Dendritic cell treated with granulocyte-macrophage colony-stimulating factor and Interleukin-4, amounts not matched to agents 40 ng/mL and 50 ng/mL, for 4 days (primary cell): ENCODE measurements at regions of chr7 and their contacts with region 1.

Region 1: DNA sequence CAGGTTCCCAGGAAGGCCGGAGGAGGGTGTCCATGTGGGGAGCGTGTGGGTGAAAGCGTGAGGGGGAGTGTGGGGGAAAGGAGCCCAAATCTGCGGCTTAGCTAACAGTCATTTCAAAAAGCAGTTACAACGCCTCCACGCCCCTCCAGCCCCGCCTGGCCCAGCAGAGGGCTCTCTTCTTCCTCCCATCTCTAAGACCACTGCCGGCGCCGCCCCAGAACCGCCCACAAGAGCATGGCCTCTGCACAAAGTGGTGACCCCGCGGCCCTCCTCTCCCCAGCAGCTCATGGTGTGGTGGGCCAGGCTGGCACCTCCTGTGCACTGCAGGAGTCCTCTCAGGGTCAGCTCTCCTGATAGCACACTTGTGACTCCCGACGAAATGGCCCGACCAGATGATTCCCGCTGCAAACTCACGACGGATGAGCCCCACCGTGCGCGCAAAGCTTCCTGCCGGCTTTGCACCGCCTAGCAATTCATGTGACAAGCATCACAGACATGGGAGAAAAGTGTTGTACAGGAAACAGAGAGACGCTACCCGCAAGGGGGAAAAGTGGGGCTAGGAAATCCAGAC is 12.4 kb upstream of the HUS1 start:
- H3K4me3 Mint-ChIP-seq: peak overlapping the region; percentile 89
- H3K27ac Mint-ChIP-seq: peak overlapping the region; percentile 85
- H3K4me1 Mint-ChIP-seq: peaks cover 27% of the 10 kb centered on the region
- H3K27me3 Mint-ChIP-seq: no peaks in the 10 kb centered on the region

Region 2: GRCh38 chr7:47600199-47601118 is 391.4 kb before region 1 on chr7:
- intact Hi-C with region 1: no loop called
- H3K4me3 Mint-ChIP-seq: no peak overlapping the region
- H3K27ac Mint-ChIP-seq: no peak overlapping the region
- H3K4me1 Mint-ChIP-seq: peaks cover 42% of the 10 kb centered on the region
- H3K27me3 Mint-ChIP-seq: peaks cover 3% of the 10 kb centered on the region

Region 3: DNA sequence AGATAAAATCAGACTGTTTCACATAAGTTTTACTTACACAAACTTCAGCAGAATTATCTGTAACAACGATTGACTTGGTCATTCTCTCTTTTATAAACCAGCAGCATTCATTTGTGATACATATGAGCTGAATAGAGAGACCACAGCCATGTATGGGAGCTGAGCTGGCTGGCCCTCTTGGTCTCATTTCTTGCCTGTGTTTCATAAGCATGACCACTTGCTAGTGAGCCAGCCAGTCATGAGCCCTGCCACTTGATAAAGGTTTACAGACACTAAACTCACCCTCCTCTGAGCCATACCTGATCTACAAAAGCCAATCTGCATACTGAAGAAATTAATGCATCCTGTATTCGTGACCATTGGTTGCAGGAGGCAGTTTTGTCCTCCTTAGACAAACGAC is 125.7 kb before region 1 on chr7:
- intact Hi-C with region 1: no loop called
- H3K4me3 Mint-ChIP-seq: no peak overlapping the region
- H3K27ac Mint-ChIP-seq: no peak overlapping the region
- H3K4me1 Mint-ChIP-seq: no peaks in the 10 kb centered on the region
- H3K27me3 Mint-ChIP-seq: peaks cover 4% of the 10 kb centered on the region

Region 4: DNA sequence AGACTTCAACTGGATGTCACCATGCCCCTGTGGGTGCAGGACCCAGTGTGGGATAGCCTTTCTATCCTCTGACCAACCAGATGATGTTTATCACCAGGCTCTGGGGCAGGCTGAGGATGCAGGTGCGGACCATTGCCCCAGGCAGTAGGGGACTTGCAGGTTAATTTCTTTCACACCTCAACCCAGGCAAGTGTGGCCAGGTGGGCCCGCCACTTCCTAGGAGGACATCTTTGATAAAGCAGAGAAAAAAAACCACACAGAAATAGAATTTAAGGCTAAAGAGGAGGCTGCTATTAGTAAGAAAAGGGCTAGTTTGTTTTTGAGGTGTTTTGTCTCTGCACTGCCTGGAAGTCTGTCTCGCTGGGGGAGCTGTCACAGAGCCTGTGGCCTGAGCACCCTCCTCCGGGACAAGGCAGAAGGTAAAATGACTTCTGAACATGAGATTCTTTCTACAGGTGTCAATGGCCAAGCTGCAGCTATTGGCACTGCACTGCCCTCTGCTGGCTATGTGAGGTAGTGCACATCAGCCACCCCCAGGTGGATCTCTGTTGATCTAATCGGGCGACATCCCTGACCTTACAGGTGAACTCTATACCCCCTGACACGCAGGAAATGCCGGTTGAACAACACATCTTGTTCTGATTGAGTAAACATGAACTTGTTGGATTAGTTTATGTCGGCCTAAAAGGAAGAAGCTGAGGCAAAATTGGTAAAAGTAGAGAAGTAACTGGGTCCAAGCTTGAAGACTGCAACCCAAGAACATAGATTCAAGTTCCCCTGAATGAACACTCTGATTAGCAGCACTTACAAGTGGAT is 118.2 kb after region 1 on chr7:
- intact Hi-C with region 1: loop called (anchors 1 kb)
- H3K4me3 Mint-ChIP-seq: no peak overlapping the region
- H3K27ac Mint-ChIP-seq: no peak overlapping the region
- H3K4me1 Mint-ChIP-seq: peaks cover 29% of the 10 kb centered on the region
- H3K27me3 Mint-ChIP-seq: peaks cover 6% of the 10 kb centered on the region

Region 5: GRCh38 chr7:48154792-48155413 is 163.1 kb after region 1 on chr7:
- intact Hi-C with region 1: loop called (anchors 2 kb)
- H3K4me3 Mint-ChIP-seq: no peak overlapping the region
- H3K27ac Mint-ChIP-seq: no peak overlapping the region
- H3K4me1 Mint-ChIP-seq: no peaks in the 10 kb centered on the region
- H3K27me3 Mint-ChIP-seq: peaks cover 9% of the 10 kb centered on the region